ENCODE measurements at regions of chr14 and their contacts with region 1.

Region 1: GRCh38 chr14:102316743-102317563 is 2.6 kb upstream of the ZNF839 start:
- DNase-seq: peak; percentile 95
- H3K4me3 Mint-ChIP-seq: peak overlapping the region; percentile 74
- H3K27ac Mint-ChIP-seq: peak overlapping the region; percentile 98
- H3K4me1 Mint-ChIP-seq: peaks cover 49% of the 10 kb centered on the region
- H3K27me3 Mint-ChIP-seq: no peaks in the 10 kb centered on the region
- CTCF ChIP-seq: peak; percentile 51

Region 2: GRCh38 chr14:102063091-102063802 is 253.7 kb before region 1 on chr14:
- CTCF ChIA-PET with region 1: interaction called, 6 read pairs
- intact Hi-C with region 1: loop called (anchors 5 kb)
- DNase-seq: peak; percentile 90
- H3K4me3 Mint-ChIP-seq: peak overlapping the region; percentile 49
- H3K27ac Mint-ChIP-seq: no peak overlapping the region
- H3K4me1 Mint-ChIP-seq: peaks cover 13% of the 10 kb centered on the region
- H3K27me3 Mint-ChIP-seq: no peaks in the 10 kb centered on the region
- CTCF ChIP-seq: peak; percentile 36

Region 3: DNA sequence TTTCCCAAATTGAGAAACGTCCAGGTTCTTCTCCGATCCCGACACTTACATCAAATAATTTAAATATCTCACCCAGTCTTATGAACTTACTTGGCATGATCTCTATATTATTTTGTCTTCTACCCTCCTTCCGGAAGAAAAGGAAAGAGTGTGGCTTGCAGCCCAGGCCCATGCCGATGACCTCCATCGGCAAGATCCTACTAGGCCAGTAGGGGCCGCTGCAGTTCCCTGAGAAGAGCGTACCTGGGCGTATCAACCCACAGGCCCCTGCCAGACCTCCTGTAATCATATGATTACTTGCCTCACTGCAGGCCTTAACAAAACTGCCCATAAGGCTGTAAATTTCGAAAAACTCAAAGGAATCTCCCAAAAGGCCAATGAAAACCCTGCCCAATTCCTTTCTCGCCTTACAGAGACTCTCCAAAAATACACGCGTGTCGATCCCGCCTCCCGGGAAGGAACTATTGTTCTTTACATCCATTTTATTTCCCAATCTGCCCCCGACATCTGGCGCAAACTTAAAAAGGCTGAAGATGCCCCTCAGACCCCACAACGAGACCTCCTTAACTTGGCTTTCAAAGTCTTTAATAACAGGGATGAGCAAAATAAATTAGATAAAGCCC is 81.6 kb before region 1 on chr14:
- CTCF ChIA-PET with region 1: interaction called, 8 read pairs
- intact Hi-C with region 1: loop called (anchors 1 kb)
- DNase-seq: peak; percentile 87
- H3K4me3 Mint-ChIP-seq: no peak overlapping the region
- H3K27ac Mint-ChIP-seq: no peak overlapping the region
- H3K4me1 Mint-ChIP-seq: no peaks in the 10 kb centered on the region
- H3K27me3 Mint-ChIP-seq: no peaks in the 10 kb centered on the region
- CTCF ChIP-seq: peak; percentile 70